ENCODE measurements at regions of chr1 and their contacts with region 1.

Region 1: GRCh38 chr1:19762175-19762779 is 37.4 kb downstream of the TMCO4 start:
- DNase-seq: peak; percentile 6
- ATAC-seq: peak; percentile 81
- H3K4me3 ChIP-seq: no peak overlapping the region
- H3K27ac ChIP-seq: no peak overlapping the region
- H3K4me1 ChIP-seq: peaks cover 11% of the 10 kb centered on the region
- H3K27me3 ChIP-seq: no peaks in the 10 kb centered on the region; a peak in 1 of 5 replicates
- CTCF ChIP-seq: peak; percentile 80
- EP300 ChIP-seq: no peak
- POLR2A ChIP-seq: no peak
- RAD21 ChIP-seq: peak; percentile 61; the same call in 1 of the 2 replicates

Region 2: GRCh38 chr1:19485362-19486187 is 276.7 kb before region 1 on chr1 and contains the start of gene CAPZB:
- CTCF ChIA-PET with region 1: no interaction called
- POLR2A ChIA-PET with region 1: no interaction called
- in situ Hi-C with region 1: no loop called
- intact Hi-C with region 1: no loop called
- DNase-seq: peak; percentile 75
- ATAC-seq: peak; percentile 76
- H3K4me3 ChIP-seq: peak within 1 kb of the TSS; percentile 84 to 100 (median 99)
- H3K27ac ChIP-seq: peak within 1 kb of the TSS; percentile 93
- H3K4me1 ChIP-seq: peaks cover 61% of the 10 kb centered on the region
- H3K27me3 ChIP-seq: no peaks in the 10 kb centered on the region; a peak in 1 of 5 replicates
- CTCF ChIP-seq: no peak
- EP300 ChIP-seq: no peak
- POLR2A ChIP-seq: peak; percentile 80 to 84
- RAD21 ChIP-seq: peak; percentile 70
- total RNA-seq, gene CAPZB: 58.9 and 84.1 TPM in 2 replicates

Region 3: DNA sequence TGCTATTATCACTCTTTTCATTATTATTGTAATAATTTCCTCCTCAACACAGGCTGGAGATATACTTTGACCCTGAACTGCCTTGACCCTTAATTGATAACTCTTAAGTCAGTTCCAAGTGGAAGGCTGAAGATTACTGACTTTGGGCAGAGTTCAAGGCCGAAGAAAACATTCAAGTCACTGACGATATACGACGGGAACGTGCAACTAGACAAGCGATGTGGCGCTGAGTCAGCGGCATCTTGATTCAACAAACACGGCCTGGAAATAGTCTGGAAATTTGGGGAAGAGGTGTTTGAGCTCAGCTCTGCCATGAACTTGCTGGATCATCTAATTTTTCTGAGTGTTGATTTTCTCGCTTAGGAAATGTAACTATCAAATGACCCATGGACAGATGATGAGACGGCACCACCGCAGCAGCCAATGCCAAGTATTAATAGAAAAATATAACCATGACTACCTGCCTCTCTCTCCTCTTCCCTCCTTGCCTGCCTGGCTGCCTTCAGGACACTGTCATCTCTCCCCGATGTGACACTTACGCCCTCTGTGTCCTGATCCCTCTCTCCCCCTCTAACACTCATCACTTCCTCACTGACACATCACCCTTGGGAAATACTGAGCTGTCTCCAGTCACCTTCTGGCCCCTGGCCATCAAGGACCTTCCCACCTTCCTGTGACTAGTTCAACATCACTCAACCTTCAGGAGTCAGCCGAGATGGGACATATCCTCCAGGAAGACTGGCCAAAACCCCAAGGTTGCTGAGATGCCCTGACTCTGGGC is 12.0 kb before region 1 on chr1:
- CTCF ChIA-PET with region 1: no interaction called
- POLR2A ChIA-PET with region 1: no interaction called
- in situ Hi-C with region 1: no loop called
- intact Hi-C with region 1: no loop called
- DNase-seq: no peak
- ATAC-seq: no peak
- H3K4me3 ChIP-seq: no peak overlapping the region
- H3K27ac ChIP-seq: no peak overlapping the region
- H3K4me1 ChIP-seq: no peaks in the 10 kb centered on the region
- H3K27me3 ChIP-seq: no peaks in the 10 kb centered on the region
- CTCF ChIP-seq: no peak
- EP300 ChIP-seq: no peak
- POLR2A ChIP-seq: no peak
- RAD21 ChIP-seq: no peak

Region 4: GRCh38 chr1:19802246-19802645 is 40.0 kb after region 1 on chr1:
- CTCF ChIA-PET with region 1: no interaction called
- POLR2A ChIA-PET with region 1: no interaction called
- in situ Hi-C with region 1: no loop called
- intact Hi-C with region 1: no loop called
- DNase-seq: no peak
- ATAC-seq: no peak
- H3K4me3 ChIP-seq: no peak overlapping the region
- H3K27ac ChIP-seq: no peak overlapping the region
- H3K4me1 ChIP-seq: peaks cover 39% of the 10 kb centered on the region
- H3K27me3 ChIP-seq: peaks cover 2 to 22% of the 10 kb centered on the region in 2 experiments; a peak in 3 of 5 replicates
- CTCF ChIP-seq: no peak
- EP300 ChIP-seq: no peak
- POLR2A ChIP-seq: no peak
- RAD21 ChIP-seq: no peak

Region 5: DNA sequence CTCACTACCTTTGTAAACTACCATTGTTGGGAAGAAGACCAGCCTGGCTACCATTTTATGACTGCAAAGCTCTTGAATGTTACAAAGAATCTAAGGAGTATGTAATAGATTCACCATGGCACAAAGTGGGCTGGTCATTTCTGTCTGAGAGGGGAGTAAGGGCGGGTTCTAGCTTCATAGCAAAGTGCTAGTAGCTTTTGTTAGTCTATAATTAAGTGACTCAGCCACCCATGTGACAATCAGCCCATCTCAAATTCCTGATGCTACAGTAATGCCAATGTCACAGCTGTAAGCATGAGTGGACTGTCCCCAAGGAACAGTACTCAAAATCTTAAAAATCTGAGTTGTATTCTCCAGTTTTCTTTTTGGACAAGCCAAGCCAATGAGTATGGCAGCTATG is 104.5 kb after region 1 on chr1:
- CTCF ChIA-PET with region 1: interaction called, 5 read pairs
- POLR2A ChIA-PET with region 1: no interaction called
- in situ Hi-C with region 1: loop called (anchors 5 kb)
- intact Hi-C with region 1: no loop called
- DNase-seq: no peak
- ATAC-seq: no peak
- H3K4me3 ChIP-seq: no peak overlapping the region
- H3K27ac ChIP-seq: no peak overlapping the region
- H3K4me1 ChIP-seq: peaks cover 13% of the 10 kb centered on the region
- H3K27me3 ChIP-seq: 0 out of 5 replicates have a peak, but pooled peaks cover 0 to 7% of the 10 kb centered on the region in 2 experiments
- CTCF ChIP-seq: no peak
- EP300 ChIP-seq: no peak
- POLR2A ChIP-seq: no peak
- RAD21 ChIP-seq: no peak

Region 6: DNA sequence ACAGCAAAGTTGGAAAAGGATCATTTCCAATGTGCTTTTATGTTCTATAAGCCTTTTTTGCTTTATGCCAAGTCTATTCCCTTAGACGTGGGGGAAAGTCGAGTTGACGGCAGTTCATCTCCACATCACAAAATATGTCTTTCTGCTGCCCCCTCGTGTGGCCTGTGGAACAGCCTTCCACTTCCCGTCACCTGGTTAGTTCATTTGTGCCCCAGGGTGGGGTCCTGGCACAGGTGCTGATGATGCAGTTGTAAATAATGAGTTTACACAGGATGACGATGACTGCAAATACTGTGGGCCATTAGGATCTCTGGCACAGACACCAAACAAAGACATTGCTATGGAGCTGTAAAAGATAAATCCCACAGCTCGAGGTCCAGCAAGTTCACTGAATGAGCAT is 109.9 kb after region 1 on chr1:
- CTCF ChIA-PET with region 1: interaction called, 5 read pairs
- POLR2A ChIA-PET with region 1: no interaction called
- in situ Hi-C with region 1: loop called (anchors 5 kb)
- intact Hi-C with region 1: loop called (anchors 2 kb)
- DNase-seq: peak; percentile 29
- ATAC-seq: peak; percentile 45; the same call in 1 of the 3 replicates
- H3K4me3 ChIP-seq: no peak overlapping the region
- H3K27ac ChIP-seq: no peak overlapping the region
- H3K4me1 ChIP-seq: no peaks in the 10 kb centered on the region
- H3K27me3 ChIP-seq: 0 out of 5 replicates have a peak, but pooled peaks cover 0 to 3% of the 10 kb centered on the region in 2 experiments
- CTCF ChIP-seq: peak; percentile 71
- EP300 ChIP-seq: no peak
- POLR2A ChIP-seq: no peak
- RAD21 ChIP-seq: no peak; the same call in 1 of the 2 replicates

Measured in HepG2 (cell line).